Heart left ventricle (tissue), 16 donors: ENCODE measurements at regions of chr13 and their contacts with region 1.

Region 1: DNA sequence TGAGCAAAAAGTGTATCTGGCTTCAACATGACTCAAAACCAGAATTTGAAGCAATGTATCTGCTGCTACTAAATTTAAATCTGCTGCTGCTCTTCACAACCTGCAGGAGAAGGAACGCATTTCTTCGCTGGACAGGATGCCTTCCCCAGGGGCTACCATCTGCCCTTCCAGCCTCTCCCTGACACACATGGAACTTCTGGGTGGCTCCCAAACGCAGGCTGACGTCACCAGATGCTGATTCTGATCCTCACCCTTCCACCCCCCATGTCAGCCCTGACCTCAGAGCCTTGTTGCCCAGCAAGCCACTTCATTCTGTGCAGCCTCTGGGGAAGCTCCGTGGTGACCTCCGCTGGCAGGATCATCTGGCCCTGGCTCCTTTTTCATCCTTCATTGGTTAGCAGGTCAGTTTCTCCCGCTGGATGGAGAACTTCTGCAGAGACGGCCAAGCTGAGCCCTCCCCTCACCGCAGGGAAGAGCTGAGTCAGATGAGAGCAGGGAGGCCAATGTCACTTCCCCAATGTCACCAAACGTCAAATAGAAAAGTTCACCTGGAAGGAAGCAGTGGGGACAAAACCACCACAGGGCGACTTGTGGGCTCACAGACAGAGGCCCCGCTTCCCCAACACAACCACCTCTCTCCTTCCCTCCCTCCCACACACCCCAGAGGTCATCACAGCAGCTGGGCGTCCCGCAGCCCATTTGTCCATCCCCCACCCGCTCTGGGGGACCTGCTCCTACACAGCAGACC is 14.0 kb upstream of the RAB20 start:
- DNase-seq: peak in 3 of 5 donors; percentile 43 to 67 (median 59)
- ATAC-seq: peak; percentile 60 to 81 (median 70)
- H3K4me3 ChIP-seq: no peak overlapping the region
- H3K27ac ChIP-seq: no peak overlapping the region
- H3K4me1 ChIP-seq: peaks cover 0 to 10% (median 0%) of the 10 kb centered on the region in 12 donors
- H3K27me3 ChIP-seq: peaks cover 0 to 20% (median 8%) of the 10 kb centered on the region in 9 donors
- CTCF ChIP-seq: peak in 6 of 12 donors; percentile 9 to 33 (median 15)
- POLR2A ChIP-seq: no peak

Region 2: GRCh38 chr13:110455941-110456340 is 119.6 kb before region 1 on chr13:
- intact Hi-C with region 1: loop called in 2 of 10 experiments (anchors 1 to 10 kb)
- DNase-seq: peak; percentile 69 to 86 (median 82)
- ATAC-seq: peak; percentile 62 to 89 (median 84)
- H3K4me3 ChIP-seq: no peak overlapping the region
- H3K27ac ChIP-seq: peak overlapping the region in 2 of 12 donors; percentile 17 to 33
- H3K4me1 ChIP-seq: peaks cover 0 to 15% (median 1%) of the 10 kb centered on the region in 12 donors
- H3K27me3 ChIP-seq: no peaks in the 10 kb centered on the region
- CTCF ChIP-seq: peak; percentile 56 to 89 (median 75)
- POLR2A ChIP-seq: no peak